Activated CD4-positive, alpha-beta memory T cell treated with anti-CD3 and anti-CD28 coated beads for 36 hours (primary cell): ENCODE measurements at regions of chr7 and their contacts with region 1.

Region 1: DNA sequence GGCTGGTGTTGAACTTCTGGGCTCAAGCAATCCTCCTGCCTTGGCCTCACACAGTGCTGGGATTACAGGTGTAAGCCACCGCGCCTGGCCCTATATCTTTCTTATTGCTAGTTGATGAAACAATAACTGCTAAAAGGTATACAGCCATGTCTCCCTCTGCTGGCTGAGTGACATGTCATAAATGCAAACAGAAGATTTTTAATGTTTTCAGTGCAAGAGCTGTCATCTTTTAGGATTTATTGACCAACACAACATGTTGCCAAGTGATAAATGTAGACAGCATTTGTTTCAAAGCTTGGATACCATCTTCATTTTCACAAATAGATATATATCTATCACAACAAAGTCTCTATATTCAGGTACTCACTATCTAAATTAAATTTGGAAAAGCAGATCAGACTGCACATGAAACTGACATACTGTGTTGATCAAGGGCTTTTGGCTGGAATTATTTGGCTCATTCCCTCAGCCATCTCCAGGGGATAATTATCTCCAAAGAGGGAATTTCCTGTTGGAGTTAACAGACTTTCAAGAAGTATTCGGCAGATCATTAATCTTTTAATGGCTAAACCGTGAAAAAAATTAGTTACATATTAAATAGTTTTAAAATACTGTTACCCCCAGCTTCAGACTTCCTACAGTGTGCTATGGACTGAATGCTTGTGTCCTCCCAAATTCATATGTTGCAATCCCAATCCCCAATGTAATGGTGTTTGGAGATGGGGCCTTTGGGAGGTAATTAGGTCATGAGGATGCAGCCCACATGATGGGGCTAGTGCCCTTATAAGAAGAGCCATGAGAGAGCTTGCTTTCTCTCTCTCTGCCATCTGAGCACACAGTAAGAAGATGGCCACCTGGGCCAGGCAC is 41.3 kb upstream of the SRPK2 start:
- DNase-seq: peak; percentile 57
- H3K4me3 Mint-ChIP-seq: no peak overlapping the region
- H3K27ac Mint-ChIP-seq: no peak overlapping the region
- H3K4me1 Mint-ChIP-seq: peaks cover 19% of the 10 kb centered on the region
- H3K27me3 Mint-ChIP-seq: no peaks in the 10 kb centered on the region

Region 2: GRCh38 chr7:105098863-105099515 is 331.0 kb before region 1 on chr7:
- CTCF ChIA-PET with region 1: no interaction called
- POLR2A ChIA-PET with region 1: no interaction called
- intact Hi-C with region 1: loop called (anchors 2 kb)
- DNase-seq: no peak
- H3K4me3 Mint-ChIP-seq: no peak overlapping the region
- H3K27ac Mint-ChIP-seq: peak overlapping the region; percentile 24
- H3K4me1 Mint-ChIP-seq: peaks cover 63% of the 10 kb centered on the region
- H3K27me3 Mint-ChIP-seq: no peaks in the 10 kb centered on the region

Region 3: GRCh38 chr7:105209870-105210269 is 220.1 kb before region 1 on chr7:
- CTCF ChIA-PET with region 1: no interaction called
- POLR2A ChIA-PET with region 1: no interaction called
- intact Hi-C with region 1: loop called (anchors 2 kb)
- DNase-seq: no peak
- H3K4me3 Mint-ChIP-seq: no peak overlapping the region
- H3K27ac Mint-ChIP-seq: no peak overlapping the region
- H3K4me1 Mint-ChIP-seq: peaks cover 73% of the 10 kb centered on the region
- H3K27me3 Mint-ChIP-seq: no peaks in the 10 kb centered on the region

Region 4: DNA sequence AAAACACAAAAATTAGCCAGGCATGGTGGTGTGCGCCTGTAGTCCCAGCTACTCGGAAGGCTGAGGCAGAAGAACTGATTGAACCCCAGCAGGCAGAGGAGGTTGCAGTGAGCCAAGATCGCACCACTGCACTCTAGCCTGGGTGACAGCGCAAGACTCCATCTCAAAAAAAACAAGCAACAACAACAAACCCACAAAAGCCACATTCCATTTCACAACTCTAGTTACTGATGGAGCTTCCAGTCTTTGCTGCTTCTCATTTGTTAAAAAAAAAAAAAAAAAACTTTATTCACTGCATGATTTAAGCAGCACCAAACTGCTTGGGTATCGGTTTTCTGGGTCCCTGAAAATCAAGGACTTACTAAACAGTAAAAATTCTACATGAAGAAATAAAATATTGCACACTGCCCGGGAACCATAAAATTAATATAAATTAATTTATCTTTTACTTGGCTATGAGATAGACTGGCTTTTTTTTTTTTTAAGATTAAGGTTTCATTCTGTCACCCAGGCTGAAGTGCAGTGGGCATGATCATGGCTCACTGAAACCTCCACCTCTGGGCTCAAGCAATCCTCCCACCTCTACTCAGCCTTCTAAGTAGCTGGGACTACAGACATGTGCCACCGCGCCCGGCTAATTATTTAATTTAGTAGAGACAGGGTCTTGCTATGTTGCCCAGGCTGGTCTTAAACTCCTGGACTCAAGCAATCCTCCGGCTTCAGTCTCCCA is 83.2 kb before region 1 on chr7:
- CTCF ChIA-PET with region 1: interaction called, 5 read pairs
- POLR2A ChIA-PET with region 1: no interaction called
- intact Hi-C with region 1: loop called (anchors 2 kb)
- DNase-seq: peak; percentile 28
- H3K4me3 Mint-ChIP-seq: no peak overlapping the region
- H3K27ac Mint-ChIP-seq: no peak overlapping the region
- H3K4me1 Mint-ChIP-seq: peaks cover 51% of the 10 kb centered on the region
- H3K27me3 Mint-ChIP-seq: no peaks in the 10 kb centered on the region

Region 5: DNA sequence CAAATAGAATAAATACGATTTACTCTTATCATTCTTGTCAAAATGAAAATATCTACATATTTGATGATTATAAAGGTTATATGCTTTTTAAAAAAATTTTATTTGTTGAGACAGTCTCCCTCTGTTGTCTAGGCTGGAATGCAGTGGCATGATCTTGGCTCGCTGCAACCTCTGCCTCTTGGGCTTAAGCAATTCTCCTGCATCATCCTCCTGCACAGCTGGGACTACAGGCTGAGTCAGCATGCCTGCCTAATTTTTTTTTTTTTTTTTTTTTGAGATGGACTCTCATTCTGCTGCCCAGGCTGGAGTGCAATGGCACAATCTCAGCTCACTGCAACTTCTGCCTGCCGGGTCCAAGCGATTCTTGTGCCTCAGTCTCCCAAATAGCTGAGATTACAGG is 43.2 kb after region 1 on chr7:
- CTCF ChIA-PET with region 1: no interaction called
- POLR2A ChIA-PET with region 1: no interaction called
- intact Hi-C with region 1: no loop called
- DNase-seq: no peak
- H3K4me3 Mint-ChIP-seq: no peak overlapping the region
- H3K27ac Mint-ChIP-seq: no peak overlapping the region
- H3K4me1 Mint-ChIP-seq: no peaks in the 10 kb centered on the region
- H3K27me3 Mint-ChIP-seq: no peaks in the 10 kb centered on the region

Region 6: DNA sequence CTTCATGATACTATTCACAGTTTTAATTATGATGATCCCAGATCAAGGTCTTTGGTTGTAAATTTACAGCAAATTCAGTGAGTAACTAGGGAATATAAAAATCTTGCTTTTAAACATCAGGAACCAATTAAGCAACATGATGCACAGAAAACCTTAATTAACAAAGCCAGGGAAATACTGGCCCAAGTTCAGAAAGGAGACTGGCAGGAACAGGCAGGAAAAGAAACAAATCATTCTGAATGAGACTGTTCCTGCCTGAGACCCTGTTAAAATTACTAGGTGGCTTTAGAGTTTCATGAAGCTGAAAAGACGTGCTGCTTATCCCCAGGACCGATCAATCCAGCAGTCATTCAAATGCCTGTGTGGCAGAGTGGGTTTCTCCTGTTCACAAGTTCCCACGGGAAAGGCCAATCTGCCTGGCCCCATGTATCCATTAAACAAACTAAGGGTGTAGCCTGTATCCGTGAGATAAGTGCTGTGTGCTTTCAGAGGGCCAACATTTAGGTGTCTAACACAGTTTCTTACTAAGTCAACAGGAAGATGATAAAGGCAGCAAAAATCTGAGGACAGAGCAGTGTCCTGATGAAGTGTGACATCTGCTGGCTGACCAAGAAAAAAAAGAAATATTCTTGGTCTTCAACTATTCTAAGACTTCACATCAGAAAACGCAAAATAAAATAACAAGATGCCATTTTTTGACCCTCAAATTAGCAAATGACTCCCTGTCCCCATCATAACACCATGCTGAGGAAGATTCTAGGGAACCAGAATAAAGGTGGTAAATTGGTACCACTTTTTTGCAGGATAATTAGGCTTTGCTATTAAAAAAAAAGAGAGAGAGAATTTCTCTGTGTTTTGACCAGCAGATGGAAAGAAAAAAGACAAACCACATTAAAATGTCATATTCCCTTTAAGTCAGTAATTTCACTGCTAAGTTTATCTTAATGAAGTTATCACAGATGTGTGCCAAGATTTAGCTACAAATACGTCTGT is 57.9 kb after region 1 on chr7:
- CTCF ChIA-PET with region 1: no interaction called
- POLR2A ChIA-PET with region 1: no interaction called
- intact Hi-C with region 1: loop called (anchors 10 kb)
- DNase-seq: no peak
- H3K4me3 Mint-ChIP-seq: no peak overlapping the region
- H3K27ac Mint-ChIP-seq: no peak overlapping the region
- H3K4me1 Mint-ChIP-seq: no peaks in the 10 kb centered on the region
- H3K27me3 Mint-ChIP-seq: no peaks in the 10 kb centered on the region